Activated B cell treated with CpG ODN at 0.5 μM for 24 hours (primary cell): ENCODE measurements at regions of chr19 and their contacts with region 1.

Region 1: GRCh38 chr19:11558881-11559828 is at the start of gene ELOF1:
- DNase-seq: peak; percentile 88
- ATAC-seq: peak; percentile 86
- H3K4me3 Mint-ChIP-seq: peak within 1 kb of the TSS; percentile 98
- H3K27ac Mint-ChIP-seq: peak within 1 kb of the TSS; percentile 93
- H3K4me1 Mint-ChIP-seq: peaks cover 72% of the 10 kb centered on the region
- H3K27me3 Mint-ChIP-seq: no peaks in the 10 kb centered on the region
- CTCF ChIP-seq: no peak
- total RNA-seq, gene ELOF1: 61.7 and 66.1 TPM in 2 replicates

Region 2: GRCh38 chr19:11024259-11024658 is 534.9 kb before region 1 on chr19:
- CTCF ChIA-PET with region 1: no interaction called
- POLR2A ChIA-PET with region 1: no interaction called
- intact Hi-C with region 1: no loop called
- DNase-seq: no peak
- ATAC-seq: no peak
- H3K4me3 Mint-ChIP-seq: no peak overlapping the region
- H3K27ac Mint-ChIP-seq: no peak overlapping the region
- H3K4me1 Mint-ChIP-seq: no peaks in the 10 kb centered on the region
- H3K27me3 Mint-ChIP-seq: no peaks in the 10 kb centered on the region
- CTCF ChIP-seq: no peak

Region 3: GRCh38 chr19:11496391-11497163 is 62.6 kb before region 1 on chr19:
- CTCF ChIA-PET with region 1: no interaction called
- POLR2A ChIA-PET with region 1: interaction called, 3 read pairs
- intact Hi-C with region 1: loop called (anchors 1 kb)
- DNase-seq: peak; percentile 56
- ATAC-seq: peak; percentile 84
- H3K4me3 Mint-ChIP-seq: no peak overlapping the region
- H3K27ac Mint-ChIP-seq: no peak overlapping the region
- H3K4me1 Mint-ChIP-seq: no peaks in the 10 kb centered on the region
- H3K27me3 Mint-ChIP-seq: no peaks in the 10 kb centered on the region
- CTCF ChIP-seq: no peak

Region 4: DNA sequence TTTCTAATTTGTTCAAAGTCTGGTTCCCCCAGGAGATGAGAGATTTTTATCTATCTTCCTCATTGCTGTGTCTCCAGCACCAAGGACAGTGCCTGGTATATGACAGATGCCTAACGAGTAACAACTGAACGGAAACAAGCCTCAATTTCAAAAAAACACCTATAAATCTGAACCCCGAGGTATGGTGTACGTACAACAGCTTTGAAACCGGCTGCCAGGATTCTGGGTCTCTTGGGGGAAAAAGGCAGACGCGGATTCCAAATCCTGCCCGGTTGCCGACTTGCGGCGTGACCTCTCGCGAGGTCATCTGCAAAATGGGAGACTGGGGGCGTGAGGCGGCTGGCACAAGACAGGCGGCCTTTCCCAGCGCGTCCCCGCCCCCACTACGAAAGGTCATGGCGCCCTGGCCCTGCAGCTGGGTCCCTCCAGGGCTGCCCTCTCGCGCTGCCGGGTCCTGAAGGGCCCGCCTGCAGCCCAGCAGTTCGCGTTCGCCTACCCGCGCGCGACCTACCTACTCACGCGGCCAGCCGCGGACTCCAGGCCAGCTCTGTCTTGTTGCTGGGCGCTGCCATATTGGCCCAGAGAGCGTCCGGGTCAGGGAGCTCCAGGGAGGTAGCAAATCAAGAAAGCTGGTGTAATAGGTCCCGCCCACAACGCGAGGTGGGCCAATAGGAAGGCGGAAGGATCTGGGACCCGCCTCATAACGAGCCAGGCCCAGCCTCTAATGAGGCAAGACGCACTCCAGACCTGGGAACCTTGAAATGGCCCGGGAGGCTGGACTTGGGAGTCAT is 30.4 kb before region 1 on chr19 and contains the start of gene ECSIT:
- CTCF ChIA-PET with region 1: no interaction called
- POLR2A ChIA-PET with region 1: interaction called, 20 read pairs
- intact Hi-C with region 1: loop called (anchors 1 kb)
- DNase-seq: peak; percentile 81
- ATAC-seq: peak; percentile 99
- H3K4me3 Mint-ChIP-seq: peak within 1 kb of the TSS; percentile 93
- H3K27ac Mint-ChIP-seq: peak within 1 kb of the TSS; percentile 89
- H3K4me1 Mint-ChIP-seq: peaks cover 13% of the 10 kb centered on the region
- H3K27me3 Mint-ChIP-seq: no peaks in the 10 kb centered on the region
- CTCF ChIP-seq: no peak
- total RNA-seq, gene ECSIT: 49.3 and 54.2 TPM in 2 replicates

Region 5: DNA sequence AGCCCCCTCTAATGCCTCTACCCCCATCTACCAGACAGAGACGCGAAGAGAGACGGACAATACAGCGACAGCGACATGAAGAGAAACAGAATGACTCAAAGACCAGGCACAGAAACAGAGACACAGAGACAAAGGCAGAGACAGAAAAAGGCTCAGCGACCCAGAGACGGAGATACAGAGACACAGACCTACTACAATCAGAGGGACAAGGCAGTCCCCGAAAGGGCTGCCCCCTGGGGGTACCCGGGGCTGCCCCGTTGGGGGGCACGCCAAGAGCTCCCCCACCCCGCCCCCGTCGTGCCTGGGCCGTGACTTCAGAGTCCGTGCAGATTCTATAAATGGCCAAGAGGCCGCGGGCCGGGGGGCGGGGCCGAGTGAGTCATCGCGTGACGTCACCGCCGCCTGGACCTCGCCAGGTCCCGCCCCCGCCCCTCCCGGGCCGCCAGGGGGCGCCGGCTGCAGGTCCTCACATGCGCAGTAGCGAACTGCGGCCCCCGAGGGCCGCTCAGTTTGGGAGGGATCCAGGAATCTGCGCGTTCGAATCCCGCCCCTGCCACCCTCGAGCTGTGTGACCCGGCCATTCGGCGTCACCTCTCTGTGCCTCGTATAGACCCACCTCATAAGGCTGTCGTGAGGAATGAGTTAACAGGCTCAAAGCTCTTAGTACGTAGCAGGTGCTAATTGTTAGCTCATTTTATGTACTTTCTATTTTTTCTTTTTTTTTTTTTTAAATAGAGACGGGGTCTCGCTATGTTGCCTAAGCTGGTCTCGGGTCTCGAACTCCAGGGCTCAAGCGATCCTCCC is 23.2 kb before region 1 on chr19:
- CTCF ChIA-PET with region 1: interaction called, 15 read pairs
- POLR2A ChIA-PET with region 1: interaction called, 6 read pairs
- intact Hi-C with region 1: loop called (anchors 1 kb)
- DNase-seq: peak; percentile 96
- ATAC-seq: peak; percentile 92
- H3K4me3 Mint-ChIP-seq: peak overlapping the region; percentile 68
- H3K27ac Mint-ChIP-seq: peak overlapping the region; percentile 67
- H3K4me1 Mint-ChIP-seq: peaks cover 23% of the 10 kb centered on the region
- H3K27me3 Mint-ChIP-seq: peaks cover 14% of the 10 kb centered on the region
- CTCF ChIP-seq: no peak

Region 6: DNA sequence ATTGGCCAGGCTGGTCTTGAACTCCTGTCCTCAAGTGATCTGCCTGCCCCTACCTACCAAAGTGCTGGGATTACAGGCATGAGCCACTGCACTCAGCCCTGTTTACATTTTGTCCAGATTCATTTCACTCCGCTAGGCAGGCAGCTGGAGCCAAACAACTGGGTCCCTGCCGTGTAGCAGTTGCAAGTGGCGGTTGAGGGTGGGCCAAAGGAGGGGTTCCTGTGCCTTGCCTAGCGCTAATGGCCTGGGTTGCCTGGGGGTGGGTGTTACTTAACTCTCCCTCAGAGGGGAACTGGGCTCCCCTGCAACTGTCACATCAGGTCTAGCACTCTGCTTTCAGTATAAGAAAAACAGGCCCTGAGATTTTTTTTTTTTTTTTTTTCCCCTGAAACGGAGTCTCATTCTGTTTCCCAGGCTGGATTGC is 10.9 kb after region 1 on chr19:
- CTCF ChIA-PET with region 1: interaction called, 3 read pairs
- POLR2A ChIA-PET with region 1: interaction called, 23 read pairs
- intact Hi-C with region 1: loop called (anchors 1 kb)
- DNase-seq: no peak
- ATAC-seq: no peak
- H3K4me3 Mint-ChIP-seq: no peak overlapping the region
- H3K27ac Mint-ChIP-seq: no peak overlapping the region
- H3K4me1 Mint-ChIP-seq: peaks cover 68% of the 10 kb centered on the region
- H3K27me3 Mint-ChIP-seq: no peaks in the 10 kb centered on the region
- CTCF ChIP-seq: no peak

Region 7: DNA sequence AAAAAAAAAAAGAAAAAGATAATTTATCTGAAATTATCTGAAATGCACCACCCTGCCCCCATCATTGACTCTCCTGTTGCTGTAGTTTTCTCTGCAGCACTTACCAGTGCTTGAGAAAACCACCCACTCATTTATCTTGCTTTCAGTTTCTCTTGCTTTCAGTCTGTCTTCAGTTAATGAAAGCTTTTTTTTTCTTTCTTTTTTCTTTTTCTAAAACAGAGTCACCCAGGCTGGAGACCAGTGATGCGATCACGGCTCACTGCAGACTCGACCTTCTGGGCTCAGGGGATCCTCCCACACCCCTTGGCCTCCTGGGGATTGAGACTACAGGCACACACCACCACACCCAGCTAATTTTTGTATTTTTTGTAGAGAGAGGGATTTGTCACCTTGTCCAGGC is 22.6 kb after region 1 on chr19:
- CTCF ChIA-PET with region 1: interaction called, 70 read pairs
- POLR2A ChIA-PET with region 1: interaction called, 81 read pairs
- intact Hi-C with region 1: no loop called
- DNase-seq: peak; percentile 72
- ATAC-seq: peak; percentile 88
- H3K4me3 Mint-ChIP-seq: peak overlapping the region; percentile 73
- H3K27ac Mint-ChIP-seq: peak overlapping the region; percentile 81
- H3K4me1 Mint-ChIP-seq: peaks cover 86% of the 10 kb centered on the region
- H3K27me3 Mint-ChIP-seq: no peaks in the 10 kb centered on the region
- CTCF ChIP-seq: no peak

Region 8: GRCh38 chr19:11612816-11613511 is 53.8 kb after region 1 on chr19:
- CTCF ChIA-PET with region 1: no interaction called
- POLR2A ChIA-PET with region 1: no interaction called
- intact Hi-C with region 1: no loop called
- DNase-seq: no peak
- ATAC-seq: no peak
- H3K4me3 Mint-ChIP-seq: no peak overlapping the region
- H3K27ac Mint-ChIP-seq: no peak overlapping the region
- H3K4me1 Mint-ChIP-seq: peaks cover 2% of the 10 kb centered on the region
- H3K27me3 Mint-ChIP-seq: no peaks in the 10 kb centered on the region
- CTCF ChIP-seq: no peak

Region 9: GRCh38 chr19:11659612-11660011 is 100.5 kb after region 1 on chr19:
- CTCF ChIA-PET with region 1: no interaction called
- POLR2A ChIA-PET with region 1: no interaction called
- intact Hi-C with region 1: no loop called
- DNase-seq: no peak
- ATAC-seq: no peak
- H3K4me3 Mint-ChIP-seq: no peak overlapping the region
- H3K27ac Mint-ChIP-seq: no peak overlapping the region
- H3K4me1 Mint-ChIP-seq: no peaks in the 10 kb centered on the region
- H3K27me3 Mint-ChIP-seq: no peaks in the 10 kb centered on the region
- CTCF ChIP-seq: no peak

Region 10: GRCh38 chr19:11814029-11814699 is 255.0 kb after region 1 on chr19 and contains the start of gene ZNF440:
- CTCF ChIA-PET with region 1: no interaction called
- POLR2A ChIA-PET with region 1: interaction called, 3 read pairs
- intact Hi-C with region 1: loop called (anchors 1 kb)
- DNase-seq: peak; percentile 83
- ATAC-seq: peak; percentile 99
- H3K4me3 Mint-ChIP-seq: peak within 1 kb of the TSS; percentile 92
- H3K27ac Mint-ChIP-seq: peak within 1 kb of the TSS; percentile 84
- H3K4me1 Mint-ChIP-seq: peaks cover 28% of the 10 kb centered on the region
- H3K27me3 Mint-ChIP-seq: no peaks in the 10 kb centered on the region
- CTCF ChIP-seq: no peak
- total RNA-seq, gene ZNF440: 17.7 and 18.5 TPM in 2 replicates